CD8-positive, alpha-beta T cell (primary cell): ENCODE measurements at regions of chr18 and their contacts with region 1.

Region 1: DNA sequence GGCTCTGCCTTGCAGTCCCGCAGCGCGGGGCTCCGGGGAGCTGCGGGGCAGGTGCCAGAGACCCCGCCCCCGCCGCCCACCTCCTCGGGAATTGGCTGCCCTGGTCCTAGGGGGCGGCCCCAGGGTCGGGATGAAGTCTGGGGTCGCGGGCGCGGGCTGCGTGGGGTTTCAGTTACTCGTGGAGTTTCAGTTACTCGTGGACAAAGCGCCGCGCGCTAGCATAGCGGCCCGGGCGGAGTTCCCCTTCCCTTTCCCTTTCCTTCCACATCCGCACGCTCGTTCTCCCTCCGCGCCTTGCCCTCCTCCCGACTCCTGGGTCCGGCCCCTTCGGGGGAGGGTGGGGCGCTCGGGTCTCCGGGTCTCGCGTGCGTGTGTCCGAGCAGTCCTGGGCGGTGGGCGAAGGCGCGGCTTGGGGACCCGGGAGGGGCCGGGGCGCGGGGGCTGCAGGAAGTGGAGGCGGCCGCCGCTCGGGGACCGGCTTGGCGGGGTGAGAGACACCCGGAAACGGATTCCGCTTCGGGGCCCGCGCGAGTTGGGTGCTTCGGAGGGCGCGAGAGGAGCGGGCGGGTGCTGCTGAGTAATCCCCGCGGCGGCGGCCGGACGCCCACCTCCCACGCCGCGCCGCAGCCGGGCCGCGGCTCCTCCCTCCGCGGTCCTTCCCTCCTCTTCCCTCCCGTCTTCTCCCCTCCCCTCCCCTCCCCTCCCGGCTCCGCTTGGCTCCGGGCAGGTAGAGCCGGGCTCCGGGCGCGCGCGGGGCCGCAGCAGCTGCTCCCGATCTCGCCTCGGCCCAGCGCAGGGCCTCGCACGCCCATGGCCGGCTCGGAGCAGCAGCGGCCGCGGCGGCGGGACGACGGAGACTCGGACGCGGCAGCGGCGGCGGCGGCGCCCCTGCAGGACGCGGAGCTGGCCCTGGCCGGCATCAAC is at the start of gene TTC39C:
- DNase-seq: peak; percentile 55 to 90 (median 83)
- ATAC-seq: peak; percentile 68
- H3K4me3 ChIP-seq: peak within 1 kb of the TSS; percentile 72 to 90
- H3K4me3 Mint-ChIP-seq: peak within 1 kb of the TSS; percentile 92
- H3K27ac ChIP-seq: peak within 1 kb of the TSS; percentile 58 to 80
- H3K27ac Mint-ChIP-seq: peak within 1 kb of the TSS; percentile 90
- H3K4me1 ChIP-seq: peaks cover 78% of the 10 kb centered on the region
- H3K4me1 Mint-ChIP-seq: peaks cover 78% of the 10 kb centered on the region
- H3K27me3 ChIP-seq: no peaks in the 10 kb centered on the region
- H3K27me3 Mint-ChIP-seq: no peaks in the 10 kb centered on the region
- CTCF ChIP-seq: no peak
- total RNA-seq, gene TTC39C: 84.7 to 85.7 TPM

Region 2: DNA sequence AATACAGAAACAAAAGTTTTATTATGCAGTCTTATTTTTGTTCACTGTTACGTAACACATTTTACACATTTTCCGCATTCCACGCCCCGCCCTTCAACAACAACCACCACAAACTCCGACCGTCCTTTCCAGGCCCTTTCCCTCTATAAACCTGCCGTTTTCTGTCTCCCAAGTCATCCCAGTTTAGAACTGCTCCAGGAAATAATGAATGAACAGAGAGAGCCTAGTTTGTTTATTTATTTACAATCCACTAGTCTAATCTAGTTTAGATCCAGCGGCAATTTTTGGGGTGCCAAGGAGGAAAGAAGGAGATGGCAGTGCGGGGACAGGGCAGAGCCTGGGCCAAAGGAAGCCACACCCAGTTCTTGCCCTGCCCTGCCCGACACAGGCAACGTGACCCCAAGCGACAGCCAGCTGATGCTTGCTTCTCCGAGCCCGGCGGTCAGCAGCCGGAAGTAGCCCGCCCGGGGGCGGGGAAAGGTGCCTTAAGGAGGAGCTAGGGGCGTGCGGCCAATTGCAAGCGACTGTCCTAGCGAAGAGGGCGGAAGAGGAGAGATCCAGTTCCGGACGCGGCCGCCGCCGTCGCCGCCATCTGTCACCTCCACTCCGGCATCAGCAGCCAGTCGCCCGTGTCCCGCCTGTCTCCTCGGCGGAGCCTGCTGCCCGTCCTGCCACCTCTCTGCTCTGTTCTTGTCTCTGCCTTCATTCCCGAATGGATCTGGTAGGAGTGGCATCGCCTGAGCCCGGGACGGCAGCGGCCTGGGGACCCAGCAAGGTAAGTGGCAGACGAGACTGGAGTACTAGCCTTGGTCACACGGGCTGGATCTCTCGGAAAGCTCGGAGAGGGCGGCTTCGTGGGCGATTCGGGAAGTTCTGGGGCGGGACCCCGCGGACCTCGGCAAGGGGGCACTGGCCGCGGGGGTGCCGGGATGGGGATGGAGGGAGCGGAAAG is 561.3 kb before region 1 on chr18 and contains the start of gene RIOK3:
- CTCF ChIA-PET with region 1: no interaction called
- POLR2A ChIA-PET with region 1: no interaction called
- intact Hi-C with region 1: loop called in 1 of 2 experiments (anchors 1 kb)
- DNase-seq: peak; percentile 71 to 93 (median 85)
- ATAC-seq: peak; percentile 90
- H3K4me3 ChIP-seq: peak within 1 kb of the TSS; percentile 69 to 97
- H3K4me3 Mint-ChIP-seq: peak within 1 kb of the TSS; percentile 99
- H3K27ac ChIP-seq: peak within 1 kb of the TSS; percentile 65 to 85
- H3K27ac Mint-ChIP-seq: peak within 1 kb of the TSS; percentile 94
- H3K4me1 ChIP-seq: peaks cover 32% of the 10 kb centered on the region
- H3K4me1 Mint-ChIP-seq: peaks cover 49% of the 10 kb centered on the region
- H3K27me3 ChIP-seq: no peaks in the 10 kb centered on the region
- H3K27me3 Mint-ChIP-seq: no peaks in the 10 kb centered on the region
- CTCF ChIP-seq: no peak
- total RNA-seq, gene RIOK3: 159 to 185 TPM

Region 3: GRCh38 chr18:23619388-23619881 is 394.9 kb before region 1 on chr18:
- CTCF ChIA-PET with region 1: no interaction called
- POLR2A ChIA-PET with region 1: no interaction called
- intact Hi-C with region 1: loop called in 1 of 2 experiments (anchors 2 kb)
- DNase-seq: peak in 2 of 9 experiments; percentile 27 to 47
- ATAC-seq: peak; percentile 36
- H3K4me3 ChIP-seq: peak overlapping the region; percentile 19 to 26
- H3K4me3 Mint-ChIP-seq: peak overlapping the region; percentile 72
- H3K27ac ChIP-seq: no peak overlapping the region
- H3K27ac Mint-ChIP-seq: no peak overlapping the region
- H3K4me1 ChIP-seq: no peaks in the 10 kb centered on the region
- H3K4me1 Mint-ChIP-seq: peaks cover 11% of the 10 kb centered on the region
- H3K27me3 ChIP-seq: peaks cover 11 to 15% of the 10 kb centered on the region in 2 experiments
- H3K27me3 Mint-ChIP-seq: peaks cover 39% of the 10 kb centered on the region
- CTCF ChIP-seq: no peak

Region 4: DNA sequence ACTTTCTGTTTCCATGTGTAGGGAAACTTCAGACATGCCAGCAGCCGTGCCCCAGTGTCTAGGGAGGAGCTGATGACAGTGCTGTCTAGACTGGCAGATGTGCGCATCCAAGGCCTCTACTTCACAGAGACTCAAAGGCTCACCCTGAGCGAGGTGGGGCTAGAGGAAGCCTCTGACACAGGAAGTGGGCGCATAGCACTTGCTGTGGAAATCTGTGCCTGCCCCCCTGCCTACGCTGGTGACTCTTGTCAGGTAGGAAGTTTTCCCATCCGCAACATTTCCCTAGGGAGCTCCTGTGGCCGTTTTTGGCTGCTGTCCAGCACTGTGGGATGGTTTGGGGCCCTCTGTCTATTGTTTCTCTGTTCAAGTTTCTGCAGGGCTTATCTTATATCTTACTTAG is 142.9 kb before region 1 on chr18:
- CTCF ChIA-PET with region 1: no interaction called
- POLR2A ChIA-PET with region 1: no interaction called
- intact Hi-C with region 1: loop called in 1 of 2 experiments (anchors 5 kb)
- DNase-seq: peak; percentile 57 to 93 (median 81)
- ATAC-seq: peak; percentile 93
- H3K4me3 ChIP-seq: no peak overlapping the region
- H3K4me3 Mint-ChIP-seq: peak overlapping the region; percentile 71
- H3K27ac ChIP-seq: peak overlapping the region; percentile 5 to 67
- H3K27ac Mint-ChIP-seq: peak overlapping the region; percentile 98
- H3K4me1 ChIP-seq: peaks cover 48% of the 10 kb centered on the region
- H3K4me1 Mint-ChIP-seq: peaks cover 55% of the 10 kb centered on the region
- H3K27me3 ChIP-seq: no peaks in the 10 kb centered on the region
- H3K27me3 Mint-ChIP-seq: no peaks in the 10 kb centered on the region
- CTCF ChIP-seq: no peak

Region 5: GRCh38 chr18:23994361-23994902 is 19.9 kb before region 1 on chr18:
- CTCF ChIA-PET with region 1: interaction called, 3 read pairs
- POLR2A ChIA-PET with region 1: interaction called, 18 read pairs
- intact Hi-C with region 1: loop called (anchors 1 to 2 kb)
- DNase-seq: peak in 4 of 9 experiments; percentile 47 to 57 (median 52)
- ATAC-seq: peak; percentile 30
- H3K4me3 ChIP-seq: no peak overlapping the region
- H3K4me3 Mint-ChIP-seq: peak overlapping the region; percentile 85
- H3K27ac ChIP-seq: peak overlapping the region in 1 of 2 experiments; percentile 27
- H3K27ac Mint-ChIP-seq: peak overlapping the region; percentile 91
- H3K4me1 ChIP-seq: peaks cover 26% of the 10 kb centered on the region
- H3K4me1 Mint-ChIP-seq: peaks cover 65% of the 10 kb centered on the region
- H3K27me3 ChIP-seq: no peaks in the 10 kb centered on the region
- H3K27me3 Mint-ChIP-seq: no peaks in the 10 kb centered on the region
- CTCF ChIP-seq: no peak

Region 6: DNA sequence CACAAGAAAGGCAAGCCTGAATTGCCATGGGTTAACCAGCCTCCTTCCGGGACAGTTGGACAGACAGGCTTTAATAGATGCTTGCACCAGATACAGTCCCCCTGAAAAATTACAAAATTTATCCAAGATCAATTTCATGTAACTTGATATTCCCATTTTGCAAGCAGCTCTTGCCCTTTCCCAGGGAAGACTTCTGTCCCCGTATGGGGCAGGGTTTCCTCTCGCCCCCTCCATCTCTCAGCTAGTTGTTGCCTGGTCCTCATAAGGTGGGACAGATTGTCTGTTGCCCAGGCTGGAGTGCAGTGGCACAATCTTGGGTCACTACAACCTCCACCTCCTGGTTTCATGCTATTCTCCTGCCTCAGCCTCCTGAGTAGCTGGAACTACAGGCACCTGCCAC is 61.4 kb after region 1 on chr18:
- CTCF ChIA-PET with region 1: interaction called, 4 read pairs
- POLR2A ChIA-PET with region 1: no interaction called
- intact Hi-C with region 1: loop called in 1 of 2 experiments (anchors 1 kb)
- DNase-seq: no peak
- ATAC-seq: no peak
- H3K4me3 ChIP-seq: no peak overlapping the region
- H3K4me3 Mint-ChIP-seq: no peak overlapping the region
- H3K27ac ChIP-seq: no peak overlapping the region
- H3K27ac Mint-ChIP-seq: peak overlapping the region; percentile 82
- H3K4me1 ChIP-seq: peaks cover 12% of the 10 kb centered on the region
- H3K4me1 Mint-ChIP-seq: peaks cover 58% of the 10 kb centered on the region
- H3K27me3 ChIP-seq: no peaks in the 10 kb centered on the region
- H3K27me3 Mint-ChIP-seq: no peaks in the 10 kb centered on the region
- CTCF ChIP-seq: no peak